ENCODE measurements at regions of chr2 and their contacts with region 1.

Region 1: DNA sequence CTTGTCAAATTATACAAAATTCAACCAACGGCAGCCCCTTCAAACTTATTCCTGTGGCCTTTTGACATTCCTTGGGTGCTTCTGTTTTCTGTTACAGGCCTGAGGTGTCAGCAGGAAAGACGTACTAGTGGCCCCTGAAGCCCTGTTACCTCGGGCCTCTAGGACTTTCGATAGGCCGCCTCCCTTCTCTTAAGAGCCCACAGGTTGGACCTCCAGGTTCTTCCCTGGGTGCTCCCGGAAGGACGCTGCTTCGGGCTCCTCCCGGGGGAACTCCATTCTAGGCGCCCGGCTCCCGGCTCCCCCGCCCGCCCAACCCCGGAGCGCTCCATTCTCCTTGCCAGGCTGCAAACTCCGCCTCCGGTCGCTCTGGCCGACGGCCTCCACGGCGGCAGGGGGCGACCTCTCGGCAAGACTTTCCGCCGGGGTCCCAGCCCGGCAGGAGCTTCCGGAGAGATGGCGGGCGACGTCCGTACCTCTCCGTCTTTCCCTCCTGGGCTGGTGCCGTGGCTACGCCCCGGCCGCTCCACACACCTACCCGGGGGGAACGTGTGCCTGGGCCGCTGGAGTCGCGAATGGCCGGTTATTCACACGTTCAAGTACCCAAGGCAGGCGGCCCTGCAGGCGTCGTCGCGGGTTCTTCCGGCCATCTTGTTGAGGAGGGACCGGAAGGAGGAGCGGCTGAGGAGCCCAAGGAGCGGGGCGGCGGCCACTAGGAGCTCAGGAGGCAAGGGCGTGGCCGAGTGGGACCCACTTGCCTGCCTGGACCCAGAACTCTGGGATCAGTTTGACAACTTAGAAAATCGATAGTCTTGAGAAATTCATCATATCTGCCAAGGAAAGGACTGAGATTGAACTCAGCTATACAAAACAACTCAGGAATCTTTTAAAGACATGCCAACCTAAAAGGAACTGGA is 27.5 kb downstream of the BOLA3 start:
- DNase-seq: peak; percentile 82
- H3K4me3 Mint-ChIP-seq: peak overlapping the region; percentile 85
- H3K27ac Mint-ChIP-seq: peak overlapping the region; percentile 95
- H3K4me1 Mint-ChIP-seq: peaks cover 13% of the 10 kb centered on the region
- H3K27me3 Mint-ChIP-seq: peaks cover 4% of the 10 kb centered on the region

Region 2: DNA sequence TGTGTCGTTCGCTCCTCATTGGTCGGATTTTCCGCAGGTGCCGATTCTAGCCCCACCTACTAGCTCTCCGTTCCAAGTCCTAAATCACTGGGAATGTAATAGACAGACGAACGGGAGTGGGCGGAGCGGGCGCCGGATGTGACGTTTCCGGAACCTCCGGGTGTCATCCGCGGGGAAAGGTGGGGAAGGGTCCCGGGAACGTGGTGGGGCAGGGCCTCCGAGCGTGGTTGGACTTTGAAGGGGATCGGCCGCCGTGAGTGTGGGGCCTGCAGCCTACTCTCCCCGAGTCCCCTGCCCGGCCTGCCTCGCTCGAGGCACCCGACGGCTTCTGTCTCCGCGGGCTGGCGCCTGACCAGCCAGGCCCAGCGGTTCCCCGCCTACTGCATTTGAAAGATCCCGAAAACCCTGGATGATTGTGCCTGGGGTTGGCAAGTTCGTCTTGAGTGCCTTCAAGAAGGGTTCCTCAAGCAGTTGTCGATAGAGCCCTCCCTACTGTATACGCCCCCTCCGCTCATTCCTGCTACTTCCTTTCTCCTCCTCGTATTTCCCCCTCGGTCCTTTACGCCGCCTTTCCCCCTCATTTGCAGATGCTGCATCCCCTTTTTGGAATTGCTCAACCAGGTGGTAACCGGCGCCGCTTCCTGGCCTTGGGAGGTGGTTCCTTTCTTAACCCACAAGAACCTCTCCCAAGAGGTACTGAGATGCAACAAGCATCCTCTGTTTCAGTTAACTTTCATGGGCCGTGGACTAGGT is 291.2 kb before region 1 on chr2 and contains the start of gene STAMBP:
- CTCF ChIA-PET with region 1: interaction called, 12 read pairs
- POLR2A ChIA-PET with region 1: no interaction called
- DNase-seq: peak; percentile 95
- H3K4me3 Mint-ChIP-seq: peak within 1 kb of the TSS; percentile 96
- H3K27ac Mint-ChIP-seq: peak within 1 kb of the TSS; percentile 97
- H3K4me1 Mint-ChIP-seq: peaks cover 46% of the 10 kb centered on the region
- H3K27me3 Mint-ChIP-seq: no peaks in the 10 kb centered on the region
- total RNA-seq, gene STAMBP: 37.2 to 38.4 TPM

Region 3: GRCh38 chr2:73914667-73915066 is 205.5 kb before region 1 on chr2:
- CTCF ChIA-PET with region 1: no interaction called
- POLR2A ChIA-PET with region 1: no interaction called
- DNase-seq: no peak
- H3K4me3 Mint-ChIP-seq: no peak overlapping the region
- H3K27ac Mint-ChIP-seq: no peak overlapping the region
- H3K4me1 Mint-ChIP-seq: peaks cover 6% of the 10 kb centered on the region
- H3K27me3 Mint-ChIP-seq: no peaks in the 10 kb centered on the region

Region 4: GRCh38 chr2:74109551-74109950 is 10.6 kb before region 1 on chr2:
- CTCF ChIA-PET with region 1: interaction called, 17 read pairs
- POLR2A ChIA-PET with region 1: no interaction called
- DNase-seq: no peak
- H3K4me3 Mint-ChIP-seq: no peak overlapping the region
- H3K27ac Mint-ChIP-seq: no peak overlapping the region
- H3K4me1 Mint-ChIP-seq: no peaks in the 10 kb centered on the region
- H3K27me3 Mint-ChIP-seq: peaks cover 4% of the 10 kb centered on the region

Region 5: DNA sequence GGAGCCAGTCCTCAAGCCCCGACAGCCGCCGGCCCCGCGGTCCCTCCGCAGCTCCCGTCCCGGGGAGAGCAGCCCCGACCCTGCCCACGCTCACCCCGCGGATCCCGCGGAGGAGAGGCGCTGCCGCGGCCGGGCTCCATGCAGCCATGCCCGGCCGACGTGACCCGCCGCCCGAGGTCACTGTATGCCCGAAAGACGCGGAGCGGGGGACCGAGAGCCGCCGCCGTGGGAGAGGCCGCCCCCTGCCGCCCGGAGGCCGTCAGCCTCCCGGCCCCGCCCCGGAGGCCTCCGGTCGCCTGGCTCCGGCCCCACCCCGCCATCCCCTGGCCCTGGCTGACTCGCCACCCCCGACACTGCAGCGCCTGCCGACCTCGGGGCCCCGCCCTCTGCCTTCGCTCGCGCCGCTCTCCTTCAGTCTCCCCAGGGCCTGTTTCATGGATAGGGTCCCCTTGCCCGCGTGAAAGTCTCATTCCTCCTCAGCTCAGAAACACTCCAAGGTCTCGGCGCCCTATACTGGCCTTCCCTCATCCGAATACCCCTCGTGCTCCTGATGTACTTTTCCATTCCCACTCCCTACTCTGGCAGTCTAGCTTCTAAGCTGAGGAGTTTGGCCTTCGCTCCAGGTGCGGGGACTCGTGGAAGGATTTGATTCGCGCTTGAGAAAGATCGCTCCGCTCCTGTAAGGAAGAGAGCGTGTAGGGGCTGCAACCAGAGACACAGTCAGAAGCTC is 27.7 kb after region 1 on chr2 and contains the start of gene BOLA3:
- CTCF ChIA-PET with region 1: interaction called, 12 read pairs
- POLR2A ChIA-PET with region 1: no interaction called
- DNase-seq: peak; percentile 82
- H3K4me3 Mint-ChIP-seq: no peak within 1 kb of the TSS
- H3K27ac Mint-ChIP-seq: no peak within 1 kb of the TSS
- H3K4me1 Mint-ChIP-seq: peaks cover under 1% of the 10 kb centered on the region
- H3K27me3 Mint-ChIP-seq: no peaks in the 10 kb centered on the region
- total RNA-seq, gene BOLA3: 53.3 to 63.2 TPM

Measured in activated CD4-positive, alpha-beta T cell treated with anti-CD3 and anti-CD28 coated beads, Interleukin-2, amount 10 ng/mL, durations not matched to agents 7 days and 5 days (primary cell).